K562 (cell line): ENCODE measurements at regions of chr16 and their contacts with region 1.

Region 1: GRCh38 chr16:88582912-88583575 is 12.8 kb downstream of the ZC3H18 start:
- DNase-seq: no peak
- ATAC-seq: no peak
- H3K4me3 ChIP-seq: no peak overlapping the region
- H3K27ac ChIP-seq: no peak overlapping the region
- H3K4me1 ChIP-seq: peaks cover 0 to 11% of the 10 kb centered on the region in 2 experiments; a peak in 2 of 5 replicates
- H3K27me3 ChIP-seq: no peaks in the 10 kb centered on the region
- CTCF ChIP-seq: no peak
- EP300 ChIP-seq: no peak
- POLR2A ChIP-seq: no peak
- RAD21 ChIP-seq: no peak

Region 2: GRCh38 chr16:88536971-88537751 is 45.9 kb before region 1 on chr16:
- CTCF ChIA-PET with region 1: no interaction called
- POLR2A ChIA-PET with region 1: no interaction called
- in situ Hi-C with region 1: no loop called
- intact Hi-C with region 1: no loop called
- DNase-seq: no peak
- ATAC-seq: peak; percentile 42
- H3K4me3 ChIP-seq: no peak overlapping the region
- H3K27ac ChIP-seq: no peak overlapping the region
- H3K4me1 ChIP-seq: peaks cover 0 to 69% of the 10 kb centered on the region in 2 experiments; a peak in 3 of 5 replicates
- H3K27me3 ChIP-seq: peaks cover 27 to 38% of the 10 kb centered on the region in 2 experiments; a peak in 4 of 5 replicates
- CTCF ChIP-seq: peak in 2 of 3 experiments; percentile 9 to 21; a peak in 1 of 6 replicates
- EP300 ChIP-seq: no peak
- POLR2A ChIP-seq: peak; percentile 28; the same call in 1 of the 2 replicates
- RAD21 ChIP-seq: 0 out of 4 replicates have a peak, but pooled peaks of 1 of the 2 experiments have one; percentile 11

Region 3: GRCh38 chr16:88569985-88570690 is 12.9 kb before region 1 on chr16 and contains the start of gene ZC3H18:
- CTCF ChIA-PET with region 1: no interaction called
- POLR2A ChIA-PET with region 1: interaction called, 27 read pairs
- in situ Hi-C with region 1: no loop called
- intact Hi-C with region 1: no loop called
- DNase-seq: peak; percentile 99 to 100 (median 99)
- ATAC-seq: peak; percentile 94
- H3K4me3 ChIP-seq: peak within 1 kb of the TSS; percentile 79
- H3K27ac ChIP-seq: peak within 1 kb of the TSS; percentile 87
- H3K4me1 ChIP-seq: peaks cover 20 to 28% of the 10 kb centered on the region in 2 experiments; a peak in 4 of 5 replicates
- H3K27me3 ChIP-seq: no peaks in the 10 kb centered on the region
- CTCF ChIP-seq: no peak
- EP300 ChIP-seq: no peak
- POLR2A ChIP-seq: peak; percentile 84
- RAD21 ChIP-seq: no peak
- polyA plus RNA-seq, gene ZC3H18: 1.7 to 2.0 TPM